CD8-positive, alpha-beta T cell (primary cell): ENCODE measurements at regions of chr10 and their contacts with region 1.

Region 1: DNA sequence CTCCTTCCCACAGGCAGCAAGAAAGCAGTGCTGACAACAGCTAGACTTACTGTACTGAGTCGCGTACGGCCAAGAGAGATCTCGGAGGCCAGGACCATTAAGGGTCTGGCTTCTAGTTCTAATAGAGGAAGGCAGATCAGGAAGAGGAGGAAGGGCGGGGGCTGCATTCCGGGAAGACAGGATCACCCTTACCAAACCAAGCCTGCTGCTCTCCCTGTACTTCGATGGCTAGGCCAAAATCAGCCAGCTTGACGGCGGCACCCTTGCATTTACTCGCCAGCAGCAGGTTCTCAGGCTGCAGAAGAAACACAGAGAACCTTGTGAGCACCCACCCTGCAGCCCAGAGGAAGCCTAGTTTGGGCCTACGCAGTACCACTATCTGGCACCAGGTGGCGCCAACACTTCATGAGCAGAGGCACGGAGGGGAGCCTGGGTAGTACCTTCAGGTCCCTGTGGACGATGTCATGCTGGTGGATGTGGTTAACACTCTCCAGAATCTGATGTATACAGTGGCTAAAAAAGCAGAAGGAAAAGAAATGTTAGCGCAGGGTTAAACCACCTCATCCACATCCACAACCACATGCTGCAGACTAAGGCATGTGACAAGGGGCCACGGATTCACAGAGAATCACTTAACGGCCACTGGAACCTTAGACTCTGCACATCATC is 25.4 kb downstream of the CAMK2G start:
- DNase-seq: peak; percentile 84 to 97 (median 92)
- ATAC-seq: peak; percentile 99
- H3K4me3 ChIP-seq: no peak overlapping the region
- H3K4me3 Mint-ChIP-seq: no peak overlapping the region
- H3K27ac ChIP-seq: peak overlapping the region; percentile 20 to 23
- H3K27ac Mint-ChIP-seq: peak overlapping the region; percentile 90
- H3K4me1 ChIP-seq: peaks cover 11% of the 10 kb centered on the region
- H3K4me1 Mint-ChIP-seq: peaks cover 13% of the 10 kb centered on the region
- H3K27me3 ChIP-seq: no peaks in the 10 kb centered on the region
- H3K27me3 Mint-ChIP-seq: no peaks in the 10 kb centered on the region
- CTCF ChIP-seq: peak; percentile 96

Region 2: GRCh38 chr10:73772280-73773151 is 76.4 kb before region 1 on chr10:
- CTCF ChIA-PET with region 1: interaction called, 11 read pairs
- POLR2A ChIA-PET with region 1: interaction called, 4 read pairs
- intact Hi-C with region 1: loop called in 1 of 2 experiments (anchors 1 kb)
- DNase-seq: peak; percentile 52 to 95 (median 78)
- ATAC-seq: peak; percentile 66
- H3K4me3 ChIP-seq: peak overlapping the region; percentile 92 to 96
- H3K4me3 Mint-ChIP-seq: peak overlapping the region; percentile 96
- H3K27ac ChIP-seq: peak overlapping the region; percentile 86 to 94
- H3K27ac Mint-ChIP-seq: peak overlapping the region; percentile 96
- H3K4me1 ChIP-seq: peaks cover 37% of the 10 kb centered on the region
- H3K4me1 Mint-ChIP-seq: peaks cover 59% of the 10 kb centered on the region
- H3K27me3 ChIP-seq: no peaks in the 10 kb centered on the region
- H3K27me3 Mint-ChIP-seq: no peaks in the 10 kb centered on the region
- CTCF ChIP-seq: no peak

Region 3: DNA sequence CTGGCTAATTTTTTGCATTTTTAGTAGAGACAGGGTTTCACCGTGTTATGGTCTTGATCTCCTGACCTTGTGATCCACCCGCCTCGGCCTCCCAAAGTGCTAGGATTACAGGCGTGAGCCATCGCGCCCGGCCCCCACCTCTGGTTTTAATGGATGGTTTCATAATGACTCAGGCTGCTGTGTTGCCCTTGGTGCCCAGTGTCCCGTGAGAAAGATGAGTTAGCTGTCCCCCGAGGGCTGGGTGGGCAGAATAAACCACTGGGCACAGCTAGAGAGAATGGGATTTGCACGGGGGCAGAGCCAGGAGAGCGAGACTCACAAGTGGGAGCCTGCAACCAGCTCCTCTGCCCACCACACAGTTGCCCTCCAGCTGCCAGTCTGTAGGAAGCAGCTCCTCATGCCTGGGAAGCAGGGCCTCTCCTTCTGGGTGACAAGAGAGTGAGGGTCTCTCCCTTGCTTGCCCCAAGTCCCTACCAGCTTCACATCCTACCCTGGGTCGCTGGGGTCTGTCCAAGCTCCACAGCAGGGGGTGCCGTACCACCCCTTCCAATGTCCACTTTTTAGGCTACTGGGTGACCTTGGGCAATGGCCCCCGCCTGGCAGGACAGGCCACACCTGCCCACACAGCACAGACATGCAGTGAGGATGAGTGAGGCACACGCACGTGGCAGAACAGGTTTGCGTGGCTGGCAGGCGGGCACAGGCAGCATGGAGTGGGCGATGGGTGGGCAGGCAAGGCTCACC is 21.4 kb before region 1 on chr10:
- CTCF ChIA-PET with region 1: interaction called, 11 read pairs
- POLR2A ChIA-PET with region 1: interaction called, 3 read pairs
- intact Hi-C with region 1: no loop called
- DNase-seq: no peak
- ATAC-seq: no peak
- H3K4me3 ChIP-seq: no peak overlapping the region
- H3K4me3 Mint-ChIP-seq: no peak overlapping the region
- H3K27ac ChIP-seq: no peak overlapping the region
- H3K27ac Mint-ChIP-seq: no peak overlapping the region
- H3K4me1 ChIP-seq: no peaks in the 10 kb centered on the region
- H3K4me1 Mint-ChIP-seq: no peaks in the 10 kb centered on the region
- H3K27me3 ChIP-seq: no peaks in the 10 kb centered on the region
- H3K27me3 Mint-ChIP-seq: no peaks in the 10 kb centered on the region
- CTCF ChIP-seq: no peak

Region 4: GRCh38 chr10:73865459-73866442 is 16.8 kb after region 1 on chr10:
- CTCF ChIA-PET with region 1: interaction called, 115 read pairs
- POLR2A ChIA-PET with region 1: interaction called, 7 read pairs
- intact Hi-C with region 1: no loop called
- DNase-seq: peak in 8 of 9 experiments; percentile 45 to 80 (median 62)
- ATAC-seq: peak; percentile 81
- H3K4me3 ChIP-seq: peak overlapping the region; percentile 41 to 73
- H3K4me3 Mint-ChIP-seq: peak overlapping the region; percentile 82
- H3K27ac ChIP-seq: peak overlapping the region; percentile 55 to 72
- H3K27ac Mint-ChIP-seq: peak overlapping the region; percentile 96
- H3K4me1 ChIP-seq: peaks cover 74% of the 10 kb centered on the region
- H3K4me1 Mint-ChIP-seq: peaks cover 85% of the 10 kb centered on the region
- H3K27me3 ChIP-seq: no peaks in the 10 kb centered on the region
- H3K27me3 Mint-ChIP-seq: no peaks in the 10 kb centered on the region
- CTCF ChIP-seq: no peak

Region 5: DNA sequence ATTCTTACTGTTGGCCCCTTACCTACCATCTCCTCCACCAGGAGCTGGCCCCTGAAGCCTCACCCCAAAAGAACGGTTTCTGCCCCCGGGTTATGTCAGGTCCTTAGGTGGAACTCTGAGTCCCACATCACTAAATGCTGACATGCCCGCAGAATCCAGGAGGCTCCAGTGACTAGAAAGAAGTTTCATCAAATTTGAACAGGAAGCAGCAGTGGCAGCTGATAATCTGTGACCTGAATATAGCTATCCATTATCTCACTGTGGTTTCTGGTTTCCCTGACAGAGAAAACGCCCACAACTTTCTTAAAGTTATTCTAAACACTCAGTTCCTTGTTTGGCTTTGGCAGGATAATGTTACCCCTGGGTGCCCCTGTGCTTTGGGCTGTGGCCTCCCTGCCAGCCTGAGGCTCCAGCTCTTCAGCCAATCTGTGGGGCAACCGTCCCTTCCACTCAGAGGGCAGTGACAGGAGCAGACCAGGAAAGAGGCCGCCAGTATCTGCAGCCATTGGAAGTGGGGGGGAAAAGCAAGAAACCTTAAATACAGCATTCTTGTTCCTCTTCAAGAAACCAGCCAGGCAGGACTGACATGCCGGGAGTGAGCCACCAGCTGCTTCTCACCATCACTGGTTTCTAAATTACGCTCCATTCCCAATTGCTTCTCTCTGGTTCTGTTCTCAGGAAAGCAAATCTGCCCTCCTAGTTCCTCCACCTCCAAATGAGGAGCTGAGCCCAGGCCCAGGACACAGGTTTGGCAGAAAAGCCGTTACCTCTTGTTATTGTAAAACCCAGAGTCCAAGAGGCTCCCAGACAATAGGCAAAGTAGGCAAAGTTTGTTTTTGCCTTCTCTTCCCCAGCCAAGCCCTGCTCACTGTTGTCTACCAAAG is 107.8 kb after region 1 on chr10:
- CTCF ChIA-PET with region 1: interaction called, 4 read pairs
- POLR2A ChIA-PET with region 1: no interaction called
- intact Hi-C with region 1: loop called in 1 of 2 experiments (anchors 1 kb)
- DNase-seq: peak in 6 of 9 experiments; percentile 12 to 77 (median 36)
- ATAC-seq: peak; percentile 80
- H3K4me3 ChIP-seq: peak overlapping the region; percentile 3 to 26
- H3K4me3 Mint-ChIP-seq: peak overlapping the region; percentile 64
- H3K27ac ChIP-seq: peak overlapping the region in 1 of 2 experiments; percentile 72
- H3K27ac Mint-ChIP-seq: peak overlapping the region; percentile 86
- H3K4me1 ChIP-seq: peaks cover 27% of the 10 kb centered on the region
- H3K4me1 Mint-ChIP-seq: peaks cover 43% of the 10 kb centered on the region
- H3K27me3 ChIP-seq: no peaks in the 10 kb centered on the region
- H3K27me3 Mint-ChIP-seq: no peaks in the 10 kb centered on the region
- CTCF ChIP-seq: no peak

Region 6: GRCh38 chr10:74035303-74035702 is 186.3 kb after region 1 on chr10:
- CTCF ChIA-PET with region 1: no interaction called
- POLR2A ChIA-PET with region 1: no interaction called
- intact Hi-C with region 1: no loop called
- DNase-seq: peak in 2 of 9 experiments; percentile 27 to 48
- ATAC-seq: no peak
- H3K4me3 ChIP-seq: no peak overlapping the region
- H3K4me3 Mint-ChIP-seq: no peak overlapping the region
- H3K27ac ChIP-seq: peak overlapping the region in 1 of 2 experiments; percentile 36
- H3K27ac Mint-ChIP-seq: peak overlapping the region; percentile 34
- H3K4me1 ChIP-seq: no peaks in the 10 kb centered on the region
- H3K4me1 Mint-ChIP-seq: peaks cover 22% of the 10 kb centered on the region
- H3K27me3 ChIP-seq: no peaks in the 10 kb centered on the region
- H3K27me3 Mint-ChIP-seq: no peaks in the 10 kb centered on the region
- CTCF ChIP-seq: peak; percentile 15

Region 7: DNA sequence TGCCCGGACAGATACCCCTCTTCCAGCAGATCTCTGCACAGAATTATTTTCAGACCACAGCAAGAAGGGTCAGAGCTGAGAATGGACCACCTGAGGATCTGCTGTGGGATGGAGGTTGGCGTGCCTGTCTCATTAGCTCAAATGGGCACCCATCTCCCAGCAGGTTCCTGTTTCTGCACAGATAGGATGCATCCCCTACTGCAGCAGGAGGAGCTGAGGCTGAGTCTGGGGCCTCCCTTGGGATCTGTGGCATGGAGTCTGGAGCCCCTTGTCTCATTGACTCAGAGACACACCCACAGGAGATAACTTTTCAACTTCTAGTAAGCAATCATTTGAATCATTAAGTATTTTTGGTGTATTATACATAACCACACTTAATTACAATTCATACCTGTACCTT is 514.8 kb after region 1 on chr10:
- CTCF ChIA-PET with region 1: no interaction called
- POLR2A ChIA-PET with region 1: no interaction called
- intact Hi-C with region 1: no loop called
- DNase-seq: no peak
- ATAC-seq: no peak
- H3K4me3 ChIP-seq: no peak overlapping the region
- H3K4me3 Mint-ChIP-seq: no peak overlapping the region
- H3K27ac ChIP-seq: no peak overlapping the region
- H3K27ac Mint-ChIP-seq: no peak overlapping the region
- H3K4me1 ChIP-seq: no peaks in the 10 kb centered on the region
- H3K4me1 Mint-ChIP-seq: no peaks in the 10 kb centered on the region
- H3K27me3 ChIP-seq: no peaks in the 10 kb centered on the region
- H3K27me3 Mint-ChIP-seq: no peaks in the 10 kb centered on the region
- CTCF ChIP-seq: no peak